ENCODE measurements at regions of chr10 and their contacts with region 1.

Region 1: DNA sequence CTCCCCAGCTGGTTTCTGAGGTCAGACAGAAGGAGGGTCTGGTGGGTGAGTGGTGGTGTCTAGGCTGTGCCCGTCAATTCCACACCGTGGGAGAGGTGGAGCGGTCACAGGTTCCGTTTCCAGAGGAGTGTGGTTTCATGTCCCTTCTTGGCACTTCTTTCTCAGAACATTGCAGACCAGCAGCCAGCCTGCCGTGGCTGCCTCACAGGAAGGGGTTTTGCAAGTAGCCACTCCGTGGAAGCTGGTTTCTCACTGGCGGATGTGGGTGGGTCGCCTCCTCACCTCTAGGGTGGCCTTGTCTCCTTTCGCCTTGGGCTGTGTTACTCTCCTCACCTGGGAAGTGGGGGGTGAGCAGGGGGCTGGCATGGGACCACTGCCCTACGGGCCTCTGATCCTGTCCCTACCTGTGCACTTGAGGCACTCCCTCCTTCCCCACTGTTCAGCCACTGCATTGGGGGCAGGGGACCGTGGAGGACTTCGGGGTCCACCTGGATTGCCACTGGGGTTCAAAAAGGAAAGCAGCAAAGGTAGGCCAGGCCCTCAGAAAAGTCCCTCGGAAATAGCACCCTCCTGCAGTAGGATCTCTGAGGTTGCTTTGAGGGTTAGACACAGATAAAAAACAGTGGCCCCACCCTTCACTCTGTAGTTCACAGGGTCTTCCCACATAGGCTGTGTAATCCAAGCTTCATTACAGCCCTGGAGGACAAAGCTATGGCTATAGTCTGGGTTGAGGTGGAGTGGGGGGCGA is 33.9 kb downstream of the TSPAN14 start:
- DNase-seq: no peak
- ATAC-seq: no peak
- H3K4me3 ChIP-seq: no peak overlapping the region
- H3K27ac ChIP-seq: no peak overlapping the region
- H3K4me1 ChIP-seq: no peaks in the 10 kb centered on the region
- H3K27me3 ChIP-seq: no peaks in the 10 kb centered on the region
- CTCF ChIP-seq: no peak

Region 2: DNA sequence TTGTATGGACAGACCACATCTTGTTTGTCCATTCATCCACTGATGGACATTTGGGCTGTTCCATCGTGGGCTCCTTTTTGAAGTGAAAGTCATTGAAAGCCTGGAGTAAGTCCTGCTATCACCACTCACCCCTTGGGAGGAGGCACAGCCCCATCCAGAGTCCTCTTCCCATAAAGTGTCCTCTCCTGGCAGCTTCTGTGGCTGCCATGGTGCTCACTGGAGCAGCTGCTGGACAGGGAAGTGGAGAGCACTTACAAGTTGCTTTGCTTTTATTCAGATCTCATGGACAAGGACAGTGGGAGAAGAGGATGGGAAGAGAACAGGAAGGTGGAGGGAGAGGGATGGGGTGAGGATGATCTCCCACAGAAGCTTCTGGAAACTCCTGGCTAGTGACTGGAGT is 994.2 kb before region 1 on chr10:
- CTCF ChIA-PET with region 1: no interaction called
- POLR2A ChIA-PET with region 1: interaction called, 23 read pairs
- in situ Hi-C with region 1: no loop called
- intact Hi-C with region 1: no loop called
- DNase-seq: no peak
- ATAC-seq: no peak
- H3K4me3 ChIP-seq: no peak overlapping the region
- H3K27ac ChIP-seq: no peak overlapping the region
- H3K4me1 ChIP-seq: no peaks in the 10 kb centered on the region
- H3K27me3 ChIP-seq: peaks cover 13% of the 10 kb centered on the region
- CTCF ChIP-seq: no peak

Region 3: GRCh38 chr10:80453701-80454513 is 34.1 kb before region 1 on chr10 and contains the start of gene TSPAN14:
- CTCF ChIA-PET with region 1: no interaction called
- POLR2A ChIA-PET with region 1: no interaction called
- in situ Hi-C with region 1: no loop called
- intact Hi-C with region 1: no loop called
- DNase-seq: no peak
- ATAC-seq: peak; percentile 91
- H3K4me3 ChIP-seq: peak within 1 kb of the TSS; percentile 81 to 87
- H3K27ac ChIP-seq: peak within 1 kb of the TSS; percentile 93
- H3K4me1 ChIP-seq: peaks cover 27% of the 10 kb centered on the region
- H3K27me3 ChIP-seq: no peaks in the 10 kb centered on the region
- CTCF ChIP-seq: no peak; the same call in 1 of the 2 replicates
- total RNA-seq, gene TSPAN14: 39.0 TPM

Measured in Panc1 (cell line).